Right cardiac atrium (tissue), 5 donors: ENCODE measurements at regions of chr15 and their contacts with region 1.

Region 1: GRCh38 chr15:52960283-52960682 is 170.1 kb upstream of the ONECUT1 start:
- DNase-seq: no peak
- ATAC-seq: no peak
- H3K4me3 ChIP-seq: no peak overlapping the region
- H3K27ac ChIP-seq: no peak overlapping the region
- H3K4me1 ChIP-seq: no peaks in the 10 kb centered on the region
- H3K27me3 ChIP-seq: no peaks in the 10 kb centered on the region

Region 2: GRCh38 chr15:53022788-53023187 is 62.5 kb after region 1 on chr15:
- intact Hi-C with region 1: loop called in 1 of 4 experiments (anchors 10 kb)
- DNase-seq: no peak
- ATAC-seq: no peak
- H3K4me3 ChIP-seq: no peak overlapping the region
- H3K27ac ChIP-seq: no peak overlapping the region
- H3K4me1 ChIP-seq: no peaks in the 10 kb centered on the region
- H3K27me3 ChIP-seq: no peaks in the 10 kb centered on the region